ENCODE measurements at regions of chr4 and their contacts with region 1.

Region 1: DNA sequence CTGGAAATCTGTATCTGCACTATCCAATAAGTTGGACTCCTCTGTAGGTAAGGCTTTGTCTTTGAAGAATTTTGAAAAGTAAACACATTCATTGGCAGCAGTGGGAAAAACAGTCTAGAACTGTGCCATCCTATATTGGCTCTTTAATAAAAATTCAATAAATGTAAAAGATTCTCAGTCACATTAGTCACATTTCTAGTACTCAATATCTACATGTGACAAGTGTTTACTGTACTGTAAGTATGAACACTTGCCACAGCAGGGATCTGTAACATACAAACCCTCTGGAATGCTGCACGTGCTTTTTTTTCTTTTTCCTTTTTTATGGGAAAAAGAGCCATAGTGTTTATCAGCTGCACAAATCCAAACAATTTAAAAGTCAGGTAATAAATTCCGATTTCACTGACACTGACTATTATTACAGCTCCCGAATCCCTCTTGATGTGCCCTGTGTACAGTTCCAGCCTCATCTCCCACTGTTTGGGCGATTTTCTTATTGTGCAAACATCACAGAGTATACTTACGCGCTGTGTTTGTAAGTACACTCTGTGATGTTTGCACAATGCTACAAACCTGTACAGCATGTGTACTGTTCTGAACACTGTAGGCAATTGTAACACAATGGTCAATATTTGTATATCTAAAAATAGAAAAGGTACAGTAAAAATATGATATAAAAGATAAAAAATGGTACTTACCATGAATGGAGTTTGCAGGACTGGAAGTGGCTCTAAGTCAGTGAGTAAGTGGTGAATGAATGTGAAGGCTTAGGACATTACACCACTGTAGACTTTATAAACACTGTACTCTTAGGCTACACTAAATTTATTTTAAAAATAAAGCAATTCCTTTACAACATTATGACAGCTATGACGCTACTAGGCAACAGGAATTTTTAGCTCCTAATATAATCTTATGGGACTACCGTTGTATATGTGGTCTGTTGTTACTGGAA is 8.7 kb downstream of the PYURF start:
- DNase-seq: no peak
- ATAC-seq: peak; percentile 82 to 93 (median 86)
- H3K4me3 ChIP-seq: no peak overlapping the region
- H3K27ac ChIP-seq: no peak overlapping the region
- H3K4me1 ChIP-seq: peaks cover 4 to 6% (median 5%) of the 10 kb centered on the region in 3 donors
- H3K27me3 ChIP-seq: no peaks in the 10 kb centered on the region
- CTCF ChIP-seq: no peak

Region 2: GRCh38 chr4:88366460-88366859 is 148.4 kb before region 1 on chr4:
- intact Hi-C with region 1: loop called in 1 of 3 experiments (anchors 5 kb)
- DNase-seq: no peak
- ATAC-seq: no peak
- H3K4me3 ChIP-seq: no peak overlapping the region
- H3K27ac ChIP-seq: no peak overlapping the region
- H3K4me1 ChIP-seq: no peaks in the 10 kb centered on the region
- H3K27me3 ChIP-seq: no peaks in the 10 kb centered on the region
- CTCF ChIP-seq: no peak